ENCODE measurements at regions of chr11 and their contacts with region 1.

Region 1: DNA sequence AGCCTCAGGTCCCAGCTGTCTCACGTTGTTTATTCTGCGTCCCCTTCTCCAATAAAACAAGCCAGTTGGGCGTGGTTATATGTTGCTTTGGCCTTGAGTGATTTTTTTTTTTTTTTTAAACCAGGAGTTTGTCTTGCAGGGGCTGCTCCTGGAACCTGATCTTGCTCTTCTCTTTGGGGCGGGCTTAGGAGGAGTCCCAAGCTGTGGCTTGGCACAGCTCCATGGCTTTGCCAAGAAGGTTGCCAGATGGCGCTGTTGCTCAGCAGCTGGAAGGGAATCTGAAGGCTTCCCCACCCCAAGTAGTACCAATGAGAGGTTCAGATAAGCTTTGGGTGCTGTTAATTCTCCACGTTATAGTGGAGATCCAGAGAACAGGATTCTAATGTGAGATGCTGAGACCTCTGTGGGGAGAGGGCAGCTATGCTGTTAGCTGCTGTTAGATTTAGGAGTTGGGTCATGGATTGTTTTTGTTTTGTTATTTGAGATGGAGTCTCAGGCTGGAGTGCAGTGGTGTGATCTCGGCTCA is 2.0 kb upstream of the FERMT3 start:
- DNase-seq: peak; percentile 89
- ATAC-seq: peak; percentile 48
- H3K4me3 ChIP-seq: no peak overlapping the region
- H3K4me3 Mint-ChIP-seq: peak overlapping the region; percentile 80
- H3K27ac ChIP-seq: peak overlapping the region in 1 of 2 donors; percentile 35
- H3K27ac Mint-ChIP-seq: peak overlapping the region; percentile 95
- H3K4me1 ChIP-seq: peaks cover 30 to 45% of the 10 kb centered on the region in 2 donors
- H3K4me1 Mint-ChIP-seq: peaks cover 44% of the 10 kb centered on the region
- H3K27me3 ChIP-seq: no peaks in the 10 kb centered on the region
- H3K27me3 Mint-ChIP-seq: no peaks in the 10 kb centered on the region
- CTCF ChIP-seq: peak; percentile 75

Region 2: DNA sequence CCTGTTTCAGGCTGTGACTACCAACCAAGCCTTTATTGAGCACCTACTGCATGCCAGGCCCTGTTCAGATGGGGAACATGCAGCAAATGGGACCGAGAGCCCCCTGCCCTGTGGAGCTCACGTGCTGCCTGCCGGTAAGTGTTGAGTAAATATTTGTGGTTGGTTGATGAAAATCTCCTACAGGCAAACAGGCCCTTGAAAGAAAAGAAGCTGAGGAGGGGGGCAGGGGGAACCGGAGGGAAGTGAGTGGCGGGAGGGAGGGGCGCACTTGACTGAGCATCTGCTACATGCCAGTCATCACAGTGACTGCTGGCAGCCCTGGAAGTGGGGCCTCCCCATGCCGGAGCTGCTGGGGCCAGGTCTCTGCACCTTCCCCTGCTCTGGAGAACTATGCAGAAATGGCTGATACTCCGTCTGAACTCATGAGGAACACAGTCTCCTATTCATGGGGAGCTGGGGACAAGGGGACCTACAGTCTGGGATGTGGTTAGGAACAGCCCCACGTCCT is 72.8 kb before region 1 on chr11:
- CTCF ChIA-PET with region 1: no interaction called
- POLR2A ChIA-PET with region 1: no interaction called
- intact Hi-C with region 1: no loop called
- DNase-seq: no peak
- ATAC-seq: no peak
- H3K4me3 ChIP-seq: no peak overlapping the region
- H3K4me3 Mint-ChIP-seq: no peak overlapping the region
- H3K27ac ChIP-seq: no peak overlapping the region
- H3K27ac Mint-ChIP-seq: no peak overlapping the region
- H3K4me1 ChIP-seq: no peaks in the 10 kb centered on the region
- H3K4me1 Mint-ChIP-seq: no peaks in the 10 kb centered on the region
- H3K27me3 ChIP-seq: no peaks in the 10 kb centered on the region
- H3K27me3 Mint-ChIP-seq: peaks cover 8% of the 10 kb centered on the region
- CTCF ChIP-seq: no peak

Region 3: GRCh38 chr11:64216879-64217278 is 12.4 kb after region 1 on chr11:
- CTCF ChIA-PET with region 1: interaction called, 62 read pairs
- POLR2A ChIA-PET with region 1: interaction called, 6 read pairs
- intact Hi-C with region 1: no loop called
- DNase-seq: no peak
- ATAC-seq: peak; percentile 28
- H3K4me3 ChIP-seq: no peak overlapping the region
- H3K4me3 Mint-ChIP-seq: no peak overlapping the region
- H3K27ac ChIP-seq: no peak overlapping the region
- H3K27ac Mint-ChIP-seq: no peak overlapping the region
- H3K4me1 ChIP-seq: peaks cover 3 to 23% of the 10 kb centered on the region in 2 donors
- H3K4me1 Mint-ChIP-seq: peaks cover 22% of the 10 kb centered on the region
- H3K27me3 ChIP-seq: no peaks in the 10 kb centered on the region
- H3K27me3 Mint-ChIP-seq: no peaks in the 10 kb centered on the region
- CTCF ChIP-seq: no peak

Region 4: GRCh38 chr11:64233913-64234834 is 29.6 kb after region 1 on chr11 and contains the start of gene VEGFB:
- CTCF ChIA-PET with region 1: interaction called, 10 read pairs
- POLR2A ChIA-PET with region 1: interaction called, 13 read pairs
- intact Hi-C with region 1: loop called (anchors 1 kb)
- DNase-seq: peak; percentile 81
- ATAC-seq: peak; percentile 59
- H3K4me3 ChIP-seq: peak within 1 kb of the TSS; percentile 53 to 84 (median 67)
- H3K4me3 Mint-ChIP-seq: peak within 1 kb of the TSS; percentile 96
- H3K27ac ChIP-seq: peak within 1 kb of the TSS; percentile 65 to 85
- H3K27ac Mint-ChIP-seq: peak within 1 kb of the TSS; percentile 96
- H3K4me1 ChIP-seq: peaks cover 33 to 70% of the 10 kb centered on the region in 2 donors
- H3K4me1 Mint-ChIP-seq: peaks cover 65% of the 10 kb centered on the region
- H3K27me3 ChIP-seq: no peaks in the 10 kb centered on the region
- H3K27me3 Mint-ChIP-seq: no peaks in the 10 kb centered on the region
- CTCF ChIP-seq: no peak
- total RNA-seq, gene VEGFB: 152 and 153 TPM in 2 replicates

Region 5: GRCh38 chr11:64246871-64247728 is 42.6 kb after region 1 on chr11 and contains the start of gene PPP1R14B:
- CTCF ChIA-PET with region 1: interaction called, 141 read pairs
- POLR2A ChIA-PET with region 1: interaction called, 11 read pairs
- intact Hi-C with region 1: no loop called
- DNase-seq: peak; percentile 85
- ATAC-seq: peak; percentile 60
- H3K4me3 ChIP-seq: peak within 1 kb of the TSS; percentile 78 to 99 (median 88)
- H3K4me3 Mint-ChIP-seq: peak within 1 kb of the TSS; percentile 90
- H3K27ac ChIP-seq: peak within 1 kb of the TSS; percentile 53 to 79
- H3K27ac Mint-ChIP-seq: peak within 1 kb of the TSS; percentile 91
- H3K4me1 ChIP-seq: peaks cover 26 to 54% of the 10 kb centered on the region in 2 donors
- H3K4me1 Mint-ChIP-seq: peaks cover 40% of the 10 kb centered on the region
- H3K27me3 ChIP-seq: no peaks in the 10 kb centered on the region
- H3K27me3 Mint-ChIP-seq: no peaks in the 10 kb centered on the region
- CTCF ChIP-seq: no peak
- total RNA-seq, gene PPP1R14B: 39.2 and 41.2 TPM in 2 replicates

Region 6: GRCh38 chr11:64358907-64359711 is 154.6 kb after region 1 on chr11 and contains the start of gene RPS6KA4:
- CTCF ChIA-PET with region 1: interaction called, 27 read pairs
- POLR2A ChIA-PET with region 1: no interaction called
- intact Hi-C with region 1: no loop called
- DNase-seq: peak; percentile 68
- ATAC-seq: peak; percentile 72
- H3K4me3 ChIP-seq: peak within 1 kb of the TSS; percentile 26 to 86 (median 75)
- H3K4me3 Mint-ChIP-seq: peak within 1 kb of the TSS; percentile 94
- H3K27ac ChIP-seq: peak within 1 kb of the TSS; percentile 12 to 46
- H3K27ac Mint-ChIP-seq: peak within 1 kb of the TSS; percentile 81
- H3K4me1 ChIP-seq: peaks cover 27 to 51% of the 10 kb centered on the region in 2 donors
- H3K4me1 Mint-ChIP-seq: peaks cover 43% of the 10 kb centered on the region
- H3K27me3 ChIP-seq: no peaks in the 10 kb centered on the region
- H3K27me3 Mint-ChIP-seq: no peaks in the 10 kb centered on the region
- CTCF ChIP-seq: no peak
- total RNA-seq, gene RPS6KA4: 22.6 and 24.2 TPM in 2 replicates